Colonic mucosa (tissue), 4 donors: ENCODE measurements at regions of chr5 and their contacts with region 1.

Region 1: GRCh38 chr5:10283927-10284635 is 23.6 kb downstream of the CMBL start:
- DNase-seq: peak; percentile 92
- H3K4me3 ChIP-seq: no peak overlapping the region
- H3K27ac ChIP-seq: no peak overlapping the region
- H3K4me1 ChIP-seq: peaks cover 8% of the 10 kb centered on the region
- H3K27me3 ChIP-seq: no peaks in the 10 kb centered on the region
- CTCF ChIP-seq: peak; percentile 94

Region 2: GRCh38 chr5:10009802-10010201 is 274.3 kb before region 1 on chr5:
- intact Hi-C with region 1: no loop called
- DNase-seq: no peak
- H3K4me3 ChIP-seq: no peak overlapping the region
- H3K27ac ChIP-seq: no peak overlapping the region
- H3K4me1 ChIP-seq: no peaks in the 10 kb centered on the region
- H3K27me3 ChIP-seq: no peaks in the 10 kb centered on the region
- CTCF ChIP-seq: no peak

Region 3: GRCh38 chr5:10364186-10364683 is 80.2 kb after region 1 on chr5:
- intact Hi-C with region 1: loop called (anchors 5 kb)
- DNase-seq: no peak
- H3K4me3 ChIP-seq: no peak overlapping the region
- H3K27ac ChIP-seq: no peak overlapping the region
- H3K4me1 ChIP-seq: no peaks in the 10 kb centered on the region
- H3K27me3 ChIP-seq: no peaks in the 10 kb centered on the region
- CTCF ChIP-seq: no peak

Region 4: GRCh38 chr5:10424124-10424731 is 140.1 kb after region 1 on chr5:
- intact Hi-C with region 1: loop called (anchors 10 kb)
- DNase-seq: no peak
- H3K4me3 ChIP-seq: no peak overlapping the region
- H3K27ac ChIP-seq: no peak overlapping the region
- H3K4me1 ChIP-seq: no peaks in the 10 kb centered on the region
- H3K27me3 ChIP-seq: no peaks in the 10 kb centered on the region
- CTCF ChIP-seq: no peak

Region 5: GRCh38 chr5:10627160-10627701 is 343.1 kb after region 1 on chr5:
- intact Hi-C with region 1: loop called (anchors 5 kb)
- DNase-seq: no peak
- H3K4me3 ChIP-seq: peak overlapping the region; percentile 35
- H3K27ac ChIP-seq: no peak overlapping the region
- H3K4me1 ChIP-seq: peaks cover 4% of the 10 kb centered on the region
- H3K27me3 ChIP-seq: no peaks in the 10 kb centered on the region
- CTCF ChIP-seq: no peak